GM10248 (cell line): ENCODE measurements at regions of chr1 and their contacts with region 1.

Region 1: GRCh38 chr1:205321164-205321958 is at the start of gene NUAK2:
- DNase-seq: peak; percentile 70
- CTCF ChIP-seq: peak; percentile 55

Region 2: GRCh38 chr1:204726478-204726877 is 594.9 kb before region 1 on chr1:
- CTCF ChIA-PET with region 1: no interaction called
- POLR2A ChIA-PET with region 1: no interaction called
- DNase-seq: no peak
- CTCF ChIP-seq: no peak

Region 3: DNA sequence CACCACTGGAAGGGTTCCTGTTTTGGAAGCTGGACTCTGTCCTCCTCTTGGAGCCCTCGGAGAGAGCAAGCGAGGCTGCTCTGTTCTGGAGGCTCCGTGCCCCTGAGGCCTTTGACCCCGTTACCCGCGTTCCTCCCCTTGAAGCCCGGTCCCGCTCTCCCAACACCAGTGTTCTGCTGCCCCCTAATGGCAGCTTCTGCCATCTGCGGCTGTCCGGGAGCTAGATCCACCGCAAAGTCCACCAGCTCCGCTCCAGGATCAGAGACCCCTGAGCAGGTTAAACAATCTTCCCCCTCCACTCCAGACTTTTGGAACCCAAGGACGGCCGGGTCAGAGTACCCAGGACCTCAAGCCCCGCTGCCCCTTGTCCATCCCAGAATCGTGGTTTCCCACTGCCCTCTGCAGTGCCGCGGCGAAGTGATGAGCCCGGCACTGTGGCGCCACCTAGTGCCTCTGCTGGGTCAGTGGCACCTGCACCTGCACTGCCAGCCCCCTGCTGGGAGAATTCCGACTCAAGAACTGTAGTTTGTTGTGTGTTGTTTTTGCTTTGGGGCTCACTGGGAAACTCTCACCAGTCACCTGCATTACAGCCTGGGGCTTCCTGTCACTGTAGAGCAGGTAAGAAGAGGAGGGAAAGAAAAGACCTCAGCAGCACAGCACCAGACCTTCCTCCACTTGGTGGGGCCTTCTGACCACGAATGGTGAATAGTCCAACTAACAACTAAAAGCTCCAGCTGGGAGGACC is 514.2 kb before region 1 on chr1:
- CTCF ChIA-PET with region 1: no interaction called
- POLR2A ChIA-PET with region 1: no interaction called
- DNase-seq: peak; percentile 90
- CTCF ChIP-seq: peak; percentile 99

Region 4: GRCh38 chr1:205056188-205056611 is 265.2 kb before region 1 on chr1:
- CTCF ChIA-PET with region 1: no interaction called
- POLR2A ChIA-PET with region 1: no interaction called
- DNase-seq: no peak
- CTCF ChIP-seq: no peak

Region 5: DNA sequence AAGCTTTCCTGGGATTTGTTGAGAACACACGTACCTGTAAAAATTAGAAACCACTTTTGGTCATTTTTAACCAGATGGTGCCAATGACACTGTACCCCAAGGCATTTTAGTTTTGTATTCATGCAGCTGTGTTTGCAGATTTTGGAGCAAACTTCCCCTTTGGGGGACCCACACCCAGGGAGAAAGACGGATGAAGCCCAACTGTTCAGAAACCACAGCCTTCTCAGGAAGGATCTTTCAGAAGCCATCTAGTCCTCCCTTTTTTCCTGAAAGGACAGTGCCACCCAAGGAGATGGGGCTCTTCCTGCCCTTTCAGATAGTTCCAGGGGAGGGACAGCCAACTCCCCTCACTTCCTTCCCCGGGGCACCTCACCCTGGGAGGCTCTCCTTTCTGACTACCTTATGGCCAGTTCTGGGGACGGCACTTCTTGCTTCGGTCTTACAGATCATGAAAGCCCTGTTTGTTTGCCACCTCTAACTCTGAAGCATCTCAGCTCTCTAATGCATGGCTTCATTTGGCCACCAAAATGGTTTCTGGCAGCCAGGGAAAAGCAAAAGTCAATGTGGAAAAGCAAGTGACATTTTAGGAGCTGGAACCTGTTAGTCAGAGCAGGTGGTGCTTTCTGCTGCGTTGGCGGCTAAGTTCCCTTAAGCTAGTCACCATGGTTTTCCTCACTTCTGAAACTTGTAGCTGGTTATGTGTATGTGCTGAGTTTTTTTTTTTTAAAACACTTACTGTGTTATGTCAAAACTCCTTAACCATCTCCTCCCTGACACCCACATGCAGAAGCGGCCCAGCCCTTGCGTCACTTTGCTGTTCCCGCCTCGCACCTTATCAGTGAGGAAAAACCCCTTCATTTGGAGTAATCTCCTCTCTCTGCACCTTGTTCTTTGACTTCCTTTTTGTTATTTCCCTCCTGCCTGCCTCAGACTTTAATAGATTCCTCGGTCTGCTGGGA is 83.6 kb before region 1 on chr1:
- CTCF ChIA-PET with region 1: interaction called, 19 read pairs
- POLR2A ChIA-PET with region 1: no interaction called
- DNase-seq: peak; percentile 57
- CTCF ChIP-seq: no peak

Region 6: DNA sequence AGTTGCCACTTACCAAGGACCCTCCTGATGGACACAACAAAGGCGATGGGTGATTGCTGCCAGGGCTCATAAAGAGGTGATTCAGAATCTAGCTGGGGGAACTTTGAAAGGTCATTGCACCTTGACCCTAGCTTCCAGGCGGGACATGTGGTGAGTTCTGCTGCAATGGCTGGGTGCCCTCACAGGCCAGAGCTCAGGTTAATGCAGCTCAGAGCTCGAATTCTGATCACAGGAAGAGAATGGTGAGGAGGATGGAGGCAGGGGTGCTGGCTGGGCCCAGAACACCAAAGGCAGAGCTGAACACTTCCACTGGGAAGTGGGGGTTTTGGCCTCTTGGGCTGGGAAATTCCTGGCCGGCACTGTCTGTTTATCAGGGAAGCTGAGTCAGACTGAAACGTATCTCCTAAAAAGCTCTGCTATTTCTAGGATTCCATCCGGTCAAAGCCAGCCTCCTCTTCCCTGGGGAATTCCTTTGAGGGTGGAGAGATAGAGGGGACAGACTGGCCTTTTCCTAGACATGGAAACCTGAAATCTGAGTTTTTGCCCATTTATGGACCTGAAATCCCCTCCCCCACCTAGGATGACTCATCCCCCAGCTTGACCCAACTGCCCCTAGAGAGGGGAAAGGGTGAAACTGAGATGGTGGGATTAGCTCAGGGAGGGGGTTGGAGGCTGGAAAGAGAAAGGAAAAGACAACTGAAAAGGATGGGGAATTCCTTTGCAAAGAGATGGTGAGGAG is 27.0 kb before region 1 on chr1:
- CTCF ChIA-PET with region 1: interaction called, 1,591 read pairs
- POLR2A ChIA-PET with region 1: no interaction called
- DNase-seq: no peak
- CTCF ChIP-seq: no peak

Region 7: DNA sequence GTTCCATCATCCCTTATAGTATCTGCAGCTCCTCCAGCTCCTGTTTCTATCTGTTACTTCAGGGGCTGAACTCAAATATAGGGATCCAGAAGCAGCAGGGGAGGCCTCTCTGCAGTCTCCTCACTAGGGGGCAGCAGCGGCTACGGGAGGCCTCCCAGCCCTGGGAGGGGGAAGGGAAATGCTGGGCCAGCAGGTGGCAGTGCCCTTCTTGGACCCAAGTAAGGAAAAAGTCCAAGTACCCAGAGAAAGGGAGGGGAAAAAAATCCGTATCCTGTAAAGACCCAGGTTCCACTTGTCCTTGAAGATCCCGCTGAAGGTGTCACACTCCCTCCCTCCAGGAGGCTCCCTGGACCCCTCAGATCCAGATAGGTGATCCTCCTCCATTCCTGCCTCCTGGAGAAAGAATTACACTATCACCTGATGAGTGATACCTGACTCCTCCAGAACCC is 14.3 kb after region 1 on chr1:
- CTCF ChIA-PET with region 1: interaction called, 83 read pairs
- POLR2A ChIA-PET with region 1: no interaction called
- DNase-seq: peak; percentile 78
- CTCF ChIP-seq: peak; percentile 96

Region 8: GRCh38 chr1:205840146-205840923 is 519.0 kb after region 1 on chr1:
- CTCF ChIA-PET with region 1: no interaction called
- POLR2A ChIA-PET with region 1: no interaction called
- DNase-seq: no peak
- CTCF ChIP-seq: no peak